HEK293T (cell line): ENCODE measurements at regions of chr1 and their contacts with region 1.

Region 1: DNA sequence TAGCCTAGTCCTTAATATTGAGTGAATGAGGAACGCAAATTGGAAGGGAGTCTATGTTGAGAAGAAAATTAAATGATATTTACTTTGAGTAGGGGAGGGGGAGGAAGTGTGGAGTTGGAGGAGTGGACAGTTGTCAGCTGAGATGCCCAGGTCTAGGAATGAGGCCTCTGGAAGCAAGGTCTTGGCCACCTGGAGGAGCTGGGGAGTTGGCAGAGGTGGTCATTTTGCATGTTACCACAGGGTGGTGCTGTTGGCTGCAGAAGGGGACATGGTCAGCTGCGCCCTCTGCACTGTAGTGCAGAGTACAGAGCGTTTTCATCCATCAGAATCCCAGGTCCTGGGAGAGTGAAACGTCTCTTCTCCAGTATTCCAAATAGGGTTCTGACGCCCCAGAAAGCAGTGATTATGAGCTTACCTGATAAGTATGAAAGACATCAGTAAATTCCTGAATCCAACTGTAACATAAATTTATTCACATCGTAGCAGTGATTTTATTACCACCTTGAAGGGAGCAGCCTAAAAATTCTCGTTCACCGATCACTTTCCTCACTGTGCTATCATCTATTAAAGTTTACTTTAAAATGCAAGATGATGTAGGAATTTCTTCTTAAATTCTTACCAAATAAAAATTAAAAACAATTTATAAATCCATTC is 13.8 kb downstream of the PARK7 start:
- DNase-seq: peak; percentile 86

Region 2: GRCh38 chr1:7961216-7962015 is 13.9 kb before region 1 on chr1 and contains the start of gene PARK7:
- CTCF ChIA-PET with region 1: interaction called, 6 read pairs
- POLR2A ChIA-PET with region 1: interaction called, 10 read pairs
- DNase-seq: peak; percentile 98

Region 3: DNA sequence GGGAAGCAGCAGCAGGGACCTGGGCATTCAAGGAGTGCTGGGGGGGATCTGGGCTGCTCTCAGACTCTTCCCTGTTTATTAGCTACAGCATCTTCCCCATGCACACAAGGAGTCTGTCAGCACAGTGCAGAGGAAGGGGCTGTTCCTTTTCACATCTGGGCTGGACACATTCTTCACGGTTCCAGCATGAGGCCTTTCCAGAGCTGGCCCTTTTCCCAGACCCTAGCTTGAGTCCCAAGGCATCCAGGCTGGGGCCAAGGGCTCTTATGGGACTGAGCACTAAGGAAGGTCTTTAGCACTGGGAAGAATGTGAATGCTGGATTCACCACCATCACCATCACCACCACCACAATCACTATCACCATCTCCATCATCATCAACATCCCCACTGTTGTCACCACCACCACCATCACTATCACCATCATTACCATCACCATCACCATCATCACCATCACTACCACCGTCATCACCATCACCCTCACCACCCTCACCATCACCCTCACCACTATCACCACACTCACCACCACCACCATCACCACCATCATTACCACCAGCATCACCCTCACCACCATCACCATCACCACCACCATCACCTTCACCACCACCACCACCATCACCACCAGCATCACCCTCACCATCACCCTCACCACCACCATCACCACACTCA is 14.6 kb after region 1 on chr1:
- CTCF ChIA-PET with region 1: interaction called, 10 read pairs
- POLR2A ChIA-PET with region 1: no interaction called
- DNase-seq: no peak

Region 4: GRCh38 chr1:8314346-8315280 is 339.3 kb after region 1 on chr1:
- CTCF ChIA-PET with region 1: interaction called, 16 read pairs
- POLR2A ChIA-PET with region 1: no interaction called
- DNase-seq: peak; percentile 86